ENCODE measurements at regions of chr6 and their contacts with region 1.

Region 1: GRCh38 chr6:10429638-10430427 is 15.0 kb upstream of the TFAP2A start:
- DNase-seq: peak in 1 of 10 donors; percentile 37

Region 2: DNA sequence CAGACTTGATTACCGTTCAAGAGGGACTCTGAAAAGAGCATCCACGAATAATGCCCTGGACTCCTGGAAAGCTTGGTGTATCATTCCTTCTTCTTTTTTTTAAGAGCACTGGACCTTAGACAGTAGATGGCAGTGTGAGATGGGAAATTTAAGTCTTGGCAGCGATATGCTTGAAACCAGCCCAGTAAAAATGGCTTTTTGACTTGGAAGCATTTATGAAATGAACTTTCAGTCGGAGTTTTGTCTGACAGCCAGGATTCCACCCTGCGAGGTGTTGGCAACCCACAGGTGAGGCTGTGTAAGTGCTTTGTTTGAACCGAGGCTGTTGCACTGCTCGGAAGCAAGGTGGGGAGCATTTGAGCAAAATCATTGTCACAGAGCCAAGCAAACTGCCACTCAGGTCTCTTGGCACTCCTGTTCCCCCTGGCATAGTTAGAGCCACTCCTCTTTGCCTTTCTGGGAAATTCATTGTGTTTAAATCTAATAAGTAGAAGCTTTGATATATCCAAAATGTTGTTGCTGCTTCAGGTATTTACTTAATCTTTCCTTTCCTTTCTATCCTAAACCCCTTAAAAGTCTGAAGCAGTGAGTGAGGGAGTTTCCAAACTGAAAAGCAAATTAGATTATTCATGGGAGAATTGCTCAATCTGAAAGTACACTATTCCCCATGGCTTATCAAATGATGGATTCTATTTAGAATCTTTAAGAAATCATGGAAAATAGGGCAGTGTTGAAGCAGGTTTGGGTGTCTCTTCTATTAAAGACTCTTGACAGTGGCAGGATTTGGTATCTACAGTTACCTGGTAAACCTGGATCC is 1721.7 kb before region 1 on chr6:
- intact Hi-C with region 1: loop called (anchors 10 kb)
- DNase-seq: no peak

Region 3: DNA sequence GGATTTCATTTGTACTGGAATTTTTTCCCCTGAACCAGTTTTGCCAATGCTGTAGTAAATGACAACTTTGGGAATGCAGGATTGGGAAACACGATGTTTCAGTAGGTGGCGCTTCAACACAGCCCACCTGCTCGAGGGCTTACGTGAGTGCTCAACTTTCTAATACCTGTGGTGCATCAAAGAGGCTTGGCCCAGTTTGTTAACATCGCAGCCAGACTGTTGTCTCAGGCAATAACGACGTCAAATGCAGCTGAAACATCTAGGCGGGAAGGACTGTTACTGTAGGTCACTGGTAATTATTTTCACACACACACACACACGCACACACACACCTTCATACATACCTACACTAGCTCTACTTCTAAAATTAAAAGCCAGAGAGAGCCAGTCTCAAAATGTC is 1179.0 kb before region 1 on chr6:
- intact Hi-C with region 1: loop called (anchors 10 kb)
- DNase-seq: peak in 5 of 10 donors; percentile 10 to 81 (median 29)

Region 4: GRCh38 chr6:9540534-9541126 is 889.2 kb before region 1 on chr6:
- intact Hi-C with region 1: loop called (anchors 2 kb)
- DNase-seq: no peak

Region 5: DNA sequence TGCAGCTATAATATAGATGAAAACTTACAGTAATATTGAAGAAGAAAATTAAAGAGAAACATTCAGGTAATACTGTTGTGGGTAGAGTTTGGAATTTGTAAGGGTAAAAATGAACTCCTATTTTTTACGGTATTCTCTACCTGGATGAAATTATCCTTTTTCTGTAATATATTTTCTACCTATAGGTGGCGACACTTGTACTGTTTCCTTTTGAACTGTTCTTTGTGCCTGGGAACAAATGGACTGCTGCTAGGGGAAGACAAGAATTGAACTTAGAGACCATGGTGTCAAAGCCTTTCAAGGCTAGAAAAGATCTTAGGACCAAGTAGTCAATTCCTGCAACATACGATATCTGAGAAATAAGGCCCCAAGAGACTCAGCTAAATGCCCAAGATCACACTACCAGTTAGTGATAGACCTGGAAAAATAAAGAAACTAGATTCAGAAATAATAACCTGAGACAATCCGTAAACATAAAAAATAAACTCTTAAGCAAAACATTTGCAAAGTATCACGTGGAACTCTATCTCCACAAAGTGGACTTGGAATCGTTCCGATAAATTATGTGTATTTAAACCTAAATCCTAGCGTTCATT is 398.8 kb before region 1 on chr6:
- intact Hi-C with region 1: loop called (anchors 5 kb)
- DNase-seq: no peak

Region 6: DNA sequence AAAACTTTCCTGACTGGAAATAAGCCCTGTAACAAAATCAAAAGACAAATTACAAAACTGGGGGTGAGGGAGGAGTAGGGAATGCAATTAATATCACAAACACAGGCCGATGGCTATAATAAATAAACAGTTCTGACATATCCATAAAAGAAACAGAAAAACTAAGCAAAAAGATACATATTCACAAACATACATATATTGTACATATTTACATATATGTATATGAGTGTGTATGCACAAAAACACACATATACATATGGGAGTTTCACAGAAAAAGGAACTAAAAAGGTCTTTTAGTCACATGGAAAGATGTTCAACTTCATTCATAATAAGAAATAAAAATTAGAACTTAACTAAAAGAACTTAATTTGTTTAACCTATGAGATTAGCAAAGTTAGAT is 307.7 kb before region 1 on chr6:
- intact Hi-C with region 1: no loop called
- DNase-seq: no peak